Natural killer cell (primary cell): ENCODE measurements at regions of chr13 and their contacts with region 1.

Region 1: GRCh38 chr13:49976314-49977258 is 20.3 kb upstream of the TRIM13 start:
- DNase-seq: peak; percentile 69 to 93
- ATAC-seq: peak; percentile 82 to 87 (median 83)
- H3K4me3 ChIP-seq: no peak overlapping the region
- H3K4me3 Mint-ChIP-seq: no peak overlapping the region
- H3K27ac ChIP-seq: no peak overlapping the region
- H3K27ac Mint-ChIP-seq: no peak overlapping the region
- H3K4me1 ChIP-seq: no peaks in the 10 kb centered on the region
- H3K4me1 Mint-ChIP-seq: no peaks in the 10 kb centered on the region
- H3K27me3 ChIP-seq: no peaks in the 10 kb centered on the region
- H3K27me3 Mint-ChIP-seq: no peaks in the 10 kb centered on the region
- CTCF ChIP-seq: peak; percentile 87

Region 2: DNA sequence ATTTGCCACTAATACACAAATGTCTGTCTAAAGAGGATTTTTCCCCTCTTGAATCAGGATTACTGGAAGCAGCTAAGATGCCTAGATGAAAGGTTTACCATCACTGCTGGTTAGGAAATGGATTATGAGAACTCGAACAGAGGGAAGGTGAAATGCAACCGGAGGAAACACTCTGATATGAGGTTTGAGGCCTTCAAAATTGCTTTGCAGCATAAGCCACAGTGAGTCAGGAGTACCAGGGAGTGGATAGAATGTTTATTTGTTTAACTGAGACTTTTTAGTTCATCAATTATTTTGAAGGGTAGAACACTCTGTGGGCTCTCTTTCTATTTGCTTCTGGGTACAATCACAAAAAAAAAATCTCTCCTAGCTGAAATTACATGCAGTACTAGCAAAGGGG is 710.8 kb before region 1 on chr13:
- intact Hi-C with region 1: no loop called
- DNase-seq: no peak
- ATAC-seq: no peak
- H3K4me3 ChIP-seq: no peak overlapping the region
- H3K4me3 Mint-ChIP-seq: no peak overlapping the region
- H3K27ac ChIP-seq: no peak overlapping the region
- H3K27ac Mint-ChIP-seq: no peak overlapping the region
- H3K4me1 ChIP-seq: no peaks in the 10 kb centered on the region
- H3K4me1 Mint-ChIP-seq: no peaks in the 10 kb centered on the region
- H3K27me3 ChIP-seq: no peaks in the 10 kb centered on the region
- H3K27me3 Mint-ChIP-seq: no peaks in the 10 kb centered on the region
- CTCF ChIP-seq: no peak

Region 3: DNA sequence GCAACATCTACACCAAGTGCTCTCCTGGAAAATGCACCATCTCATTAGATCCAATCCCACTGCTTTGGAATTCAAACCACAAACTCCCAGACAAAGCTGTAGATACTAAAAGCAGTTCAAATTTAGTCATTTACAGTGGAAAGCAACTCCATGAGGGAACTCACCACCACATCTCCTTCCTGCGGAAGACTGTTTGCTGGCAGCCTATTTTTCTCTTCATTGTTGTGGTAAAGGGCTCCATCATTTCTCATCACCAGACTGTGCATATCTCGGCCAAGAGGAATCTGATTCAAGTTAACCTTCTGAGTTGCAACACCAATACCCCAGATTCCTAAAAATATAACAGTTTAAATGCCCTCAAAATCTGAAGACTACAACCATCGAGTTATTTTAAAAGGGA is 48.8 kb before region 1 on chr13:
- intact Hi-C with region 1: no loop called
- DNase-seq: no peak
- ATAC-seq: no peak
- H3K4me3 ChIP-seq: no peak overlapping the region
- H3K4me3 Mint-ChIP-seq: no peak overlapping the region
- H3K27ac ChIP-seq: no peak overlapping the region
- H3K27ac Mint-ChIP-seq: no peak overlapping the region
- H3K4me1 ChIP-seq: no peaks in the 10 kb centered on the region
- H3K4me1 Mint-ChIP-seq: no peaks in the 10 kb centered on the region
- H3K27me3 ChIP-seq: no peaks in the 10 kb centered on the region
- H3K27me3 Mint-ChIP-seq: no peaks in the 10 kb centered on the region
- CTCF ChIP-seq: no peak

Region 4: GRCh38 chr13:50033725-50034124 is 57.1 kb after region 1 on chr13:
- intact Hi-C with region 1: no loop called
- DNase-seq: no peak
- ATAC-seq: no peak
- H3K4me3 ChIP-seq: no peak overlapping the region
- H3K4me3 Mint-ChIP-seq: no peak overlapping the region
- H3K27ac ChIP-seq: no peak overlapping the region
- H3K27ac Mint-ChIP-seq: no peak overlapping the region
- H3K4me1 ChIP-seq: no peaks in the 10 kb centered on the region
- H3K4me1 Mint-ChIP-seq: peaks cover 0 to 5% of the 10 kb centered on the region in 2 donors
- H3K27me3 ChIP-seq: no peaks in the 10 kb centered on the region
- H3K27me3 Mint-ChIP-seq: no peaks in the 10 kb centered on the region
- CTCF ChIP-seq: no peak

Region 5: GRCh38 chr13:50130123-50130946 is 153.7 kb after region 1 on chr13:
- intact Hi-C with region 1: no loop called
- DNase-seq: peak; percentile 38 to 65
- ATAC-seq: peak in 2 of 3 donors; percentile 28 to 32
- H3K4me3 ChIP-seq: peak overlapping the region; percentile 24
- H3K4me3 Mint-ChIP-seq: peak overlapping the region; percentile 71
- H3K27ac ChIP-seq: no peak overlapping the region
- H3K27ac Mint-ChIP-seq: peak overlapping the region; percentile 34 to 61
- H3K4me1 ChIP-seq: peaks cover 55% of the 10 kb centered on the region
- H3K4me1 Mint-ChIP-seq: peaks cover 42 to 53% of the 10 kb centered on the region in 2 donors
- H3K27me3 ChIP-seq: peaks cover 58% of the 10 kb centered on the region
- H3K27me3 Mint-ChIP-seq: peaks cover 35 to 53% of the 10 kb centered on the region in 2 donors
- CTCF ChIP-seq: no peak

Region 6: DNA sequence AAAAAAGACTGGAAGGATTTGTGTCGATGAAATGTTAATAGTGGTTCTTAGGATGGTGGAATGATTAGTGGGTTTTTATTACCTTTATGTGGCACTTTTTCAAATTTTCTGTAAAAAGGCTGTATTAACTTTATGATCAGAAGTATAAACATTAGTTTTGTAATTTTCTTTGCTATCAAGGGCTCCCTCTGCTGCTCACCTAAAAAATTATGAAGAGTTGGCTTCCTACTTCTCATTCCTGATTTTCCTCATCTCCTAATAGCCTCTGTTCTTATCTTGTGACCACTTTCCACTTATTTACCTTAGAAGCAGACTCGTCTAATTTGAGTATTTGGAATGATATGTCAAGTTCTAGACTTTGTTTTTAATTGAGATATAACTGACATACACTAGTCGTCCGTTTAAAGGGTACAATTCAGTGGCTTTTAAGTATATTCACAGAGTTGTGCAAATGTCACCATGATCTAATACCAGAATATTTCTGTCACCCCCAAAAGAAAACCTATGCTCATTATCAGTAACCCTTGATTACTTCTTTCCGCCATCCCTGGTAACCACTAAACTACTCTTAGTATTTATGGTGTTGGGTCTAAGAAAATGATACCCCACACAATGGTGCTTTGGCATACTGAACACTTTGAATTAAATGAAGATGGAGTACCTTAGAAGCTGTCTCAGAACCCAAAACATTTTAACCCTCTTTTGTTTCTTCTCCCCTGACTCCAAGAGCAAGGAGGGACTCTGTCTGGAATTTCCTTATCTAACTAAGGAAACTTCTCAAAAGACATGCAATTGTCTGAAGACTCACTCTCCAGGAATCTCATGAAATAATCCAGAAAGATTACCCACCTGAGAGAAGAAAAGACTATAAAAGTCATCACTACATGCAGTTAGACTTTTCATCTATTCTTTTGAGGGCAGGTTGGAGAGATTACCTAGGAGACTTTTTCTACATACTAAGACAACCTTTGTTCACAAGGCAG is 555.6 kb after region 1 on chr13:
- intact Hi-C with region 1: loop called (anchors 1 kb)
- DNase-seq: peak in 1 of 2 donors; percentile 44
- ATAC-seq: no peak
- H3K4me3 ChIP-seq: no peak overlapping the region
- H3K4me3 Mint-ChIP-seq: no peak overlapping the region
- H3K27ac ChIP-seq: no peak overlapping the region
- H3K27ac Mint-ChIP-seq: no peak overlapping the region
- H3K4me1 ChIP-seq: peaks cover 6% of the 10 kb centered on the region
- H3K4me1 Mint-ChIP-seq: no peaks in the 10 kb centered on the region
- H3K27me3 ChIP-seq: no peaks in the 10 kb centered on the region
- H3K27me3 Mint-ChIP-seq: peaks cover 0 to 14% of the 10 kb centered on the region in 2 donors
- CTCF ChIP-seq: peak; percentile 67

Region 7: GRCh38 chr13:50801087-50801931 is 824.7 kb after region 1 on chr13:
- intact Hi-C with region 1: loop called (anchors 1 kb)
- DNase-seq: peak; percentile 36 to 86
- ATAC-seq: peak; percentile 91 to 98 (median 97)
- H3K4me3 ChIP-seq: no peak overlapping the region
- H3K4me3 Mint-ChIP-seq: no peak overlapping the region
- H3K27ac ChIP-seq: peak overlapping the region; percentile 4
- H3K27ac Mint-ChIP-seq: no peak overlapping the region
- H3K4me1 ChIP-seq: peaks cover 7% of the 10 kb centered on the region
- H3K4me1 Mint-ChIP-seq: peaks cover 0 to 6% of the 10 kb centered on the region in 2 donors
- H3K27me3 ChIP-seq: no peaks in the 10 kb centered on the region
- H3K27me3 Mint-ChIP-seq: peaks cover 7 to 9% of the 10 kb centered on the region in 2 donors
- CTCF ChIP-seq: peak; percentile 80